Endothelial cell of umbilical vein (primary cell): ENCODE measurements at regions of chr18 and their contacts with region 1.

Region 1: DNA sequence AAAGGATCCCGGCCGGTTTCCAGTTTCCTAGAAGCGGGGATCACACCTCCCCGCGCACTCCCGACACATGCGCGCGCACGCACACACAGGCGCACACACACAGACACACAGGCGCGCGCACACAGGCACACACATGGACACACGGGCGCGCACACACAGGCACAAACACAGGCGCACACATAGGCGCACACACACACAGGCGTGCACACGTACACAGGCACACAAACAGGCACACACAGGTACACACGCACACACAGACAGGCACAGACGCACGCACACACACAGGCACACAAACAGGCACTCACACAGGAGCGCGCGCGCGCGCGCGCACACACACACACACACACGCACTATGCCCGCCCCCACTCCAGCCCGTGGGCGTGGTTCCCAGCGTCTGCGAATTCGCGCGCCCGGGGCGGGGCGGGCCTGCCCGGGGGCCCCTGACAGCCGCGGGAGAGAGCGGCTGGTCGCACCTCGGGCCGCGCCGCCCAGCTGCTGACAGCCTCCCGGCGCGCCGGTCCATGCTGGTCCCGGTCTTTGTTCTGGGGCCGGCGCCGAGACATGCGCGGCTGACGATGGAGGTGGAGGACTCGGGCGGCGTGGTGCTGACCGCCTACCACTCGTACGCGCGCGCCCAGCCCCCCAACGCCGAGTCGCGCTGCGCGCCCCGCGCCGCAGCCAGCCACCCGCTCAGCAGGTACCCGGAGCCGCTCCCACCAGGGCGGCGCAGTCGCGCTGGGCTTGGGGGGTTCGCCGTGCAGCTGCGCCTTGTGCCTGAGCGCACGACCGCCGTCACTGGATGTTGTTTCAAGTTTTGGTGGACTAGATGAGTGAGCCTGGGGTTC is at the start of gene ARHGAP28:
- DNase-seq: peak; percentile 96
- H3K4me3 ChIP-seq: peak within 1 kb of the TSS; percentile 44 to 84 (median 57)
- H3K27ac ChIP-seq: peak within 1 kb of the TSS; percentile 69
- H3K4me1 ChIP-seq: peaks cover 39% of the 10 kb centered on the region
- H3K27me3 ChIP-seq: peaks cover 0 to 3% of the 10 kb centered on the region in 2 experiments
- CTCF ChIP-seq: peak; percentile 32 to 53
- POLR2A ChIP-seq: peak; percentile 70
- total RNA-seq, gene ARHGAP28: 21.0 and 23.4 TPM in 2 replicates

Region 2: DNA sequence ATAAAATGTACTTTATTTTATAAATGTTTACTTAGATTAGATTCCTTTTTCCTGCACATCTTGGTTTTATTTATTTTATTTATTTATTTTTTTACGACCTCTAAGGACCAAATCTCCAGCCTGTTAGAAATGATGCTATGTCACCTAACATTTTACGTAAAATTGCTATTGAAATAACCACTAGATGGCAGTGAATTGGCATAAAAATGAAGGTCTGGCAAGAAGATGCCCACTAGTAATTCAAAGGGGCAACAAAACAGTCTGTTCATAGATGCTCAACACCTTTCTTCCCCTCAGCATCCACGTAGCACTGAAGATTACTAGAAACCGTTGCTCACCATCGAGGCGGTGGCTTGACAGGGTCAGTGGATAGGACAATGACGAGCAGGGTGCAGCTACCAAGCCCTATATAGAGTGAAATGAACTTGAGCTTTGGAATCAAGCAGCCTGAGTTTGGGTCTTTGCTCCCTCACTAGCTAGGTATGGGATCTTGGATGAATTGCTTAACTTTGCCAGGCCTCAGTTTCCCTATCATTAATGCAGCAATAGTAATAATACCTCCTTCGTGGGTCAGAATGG is 186.1 kb before region 1 on chr18:
- CTCF ChIA-PET with region 1: no interaction called
- POLR2A ChIA-PET with region 1: no interaction called
- dilution Hi-C with region 1: no loop called
- intact Hi-C with region 1: loop called (anchors 2 kb)
- DNase-seq: peak; percentile 60
- H3K4me3 ChIP-seq: no peak overlapping the region
- H3K27ac ChIP-seq: no peak overlapping the region
- H3K4me1 ChIP-seq: peaks cover 9% of the 10 kb centered on the region
- H3K27me3 ChIP-seq: no peaks in the 10 kb centered on the region
- CTCF ChIP-seq: peak; percentile 23 to 26
- POLR2A ChIP-seq: no peak

Region 3: GRCh38 chr18:6747646-6748045 is 18.2 kb after region 1 on chr18:
- CTCF ChIA-PET with region 1: interaction called, 4 read pairs
- POLR2A ChIA-PET with region 1: no interaction called
- dilution Hi-C with region 1: no loop called
- intact Hi-C with region 1: loop called (anchors 2 kb)
- DNase-seq: peak; percentile 93
- H3K4me3 ChIP-seq: no peak overlapping the region
- H3K27ac ChIP-seq: no peak overlapping the region
- H3K4me1 ChIP-seq: peaks cover 18% of the 10 kb centered on the region
- H3K27me3 ChIP-seq: no peaks in the 10 kb centered on the region
- CTCF ChIP-seq: no peak
- POLR2A ChIP-seq: no peak

Region 4: GRCh38 chr18:6781786-6782185 is 52.3 kb after region 1 on chr18:
- CTCF ChIA-PET with region 1: no interaction called
- POLR2A ChIA-PET with region 1: no interaction called
- dilution Hi-C with region 1: no loop called
- intact Hi-C with region 1: loop called (anchors 2 kb)
- DNase-seq: peak; percentile 64
- H3K4me3 ChIP-seq: no peak overlapping the region
- H3K27ac ChIP-seq: peak overlapping the region; percentile 4
- H3K4me1 ChIP-seq: peaks cover 14% of the 10 kb centered on the region
- H3K27me3 ChIP-seq: no peaks in the 10 kb centered on the region
- CTCF ChIP-seq: no peak
- POLR2A ChIP-seq: no peak

Region 5: DNA sequence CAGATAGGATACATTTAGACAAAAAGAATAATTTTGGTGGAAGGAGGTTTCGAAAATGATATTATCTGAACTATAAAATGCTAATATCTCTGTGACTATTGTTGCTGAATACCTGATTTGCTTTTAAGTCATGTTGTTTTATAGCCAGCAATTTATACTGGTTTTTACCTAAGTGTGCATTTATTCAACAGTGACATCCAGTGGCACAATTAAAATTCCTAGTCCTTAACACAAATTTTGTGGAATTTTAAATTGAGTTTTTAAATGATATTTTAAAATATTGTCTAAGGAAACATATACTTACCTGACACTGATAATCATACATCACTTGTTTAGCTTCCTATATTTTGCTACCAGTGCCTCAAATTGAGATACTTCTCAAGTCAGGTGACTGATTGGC is 144.8 kb after region 1 on chr18:
- CTCF ChIA-PET with region 1: no interaction called
- POLR2A ChIA-PET with region 1: no interaction called
- dilution Hi-C with region 1: no loop called
- intact Hi-C with region 1: loop called (anchors 5 kb)
- DNase-seq: peak; percentile 25
- H3K4me3 ChIP-seq: no peak overlapping the region
- H3K27ac ChIP-seq: no peak overlapping the region
- H3K4me1 ChIP-seq: no peaks in the 10 kb centered on the region
- H3K27me3 ChIP-seq: no peaks in the 10 kb centered on the region
- CTCF ChIP-seq: no peak
- POLR2A ChIP-seq: no peak